ENCODE measurements at regions of chr19 and their contacts with region 1.

Region 1: GRCh38 chr19:55209693-55210472 is 582 bp upstream of the PTPRH start:
- DNase-seq: peak; percentile 75
- H3K4me3 Mint-ChIP-seq: peak overlapping the region; percentile 53
- H3K27ac Mint-ChIP-seq: peak overlapping the region; percentile 88
- H3K4me1 Mint-ChIP-seq: peaks cover 33% of the 10 kb centered on the region
- H3K27me3 Mint-ChIP-seq: no peaks in the 10 kb centered on the region
- CTCF ChIP-seq: no peak

Region 2: GRCh38 chr19:55166530-55167268 is 43.2 kb before region 1 on chr19 and contains the start of gene DNAAF3:
- CTCF ChIA-PET with region 1: interaction called, 12 read pairs
- intact Hi-C with region 1: no loop called
- DNase-seq: peak; percentile 98
- H3K4me3 Mint-ChIP-seq: peak within 1 kb of the TSS; percentile 84
- H3K27ac Mint-ChIP-seq: peak within 1 kb of the TSS; percentile 96
- H3K4me1 Mint-ChIP-seq: peaks cover 6% of the 10 kb centered on the region
- H3K27me3 Mint-ChIP-seq: peaks cover 22% of the 10 kb centered on the region
- CTCF ChIP-seq: no peak
- total RNA-seq, gene DNAAF3: 10.3 and 13.1 TPM in 2 replicates

Region 3: DNA sequence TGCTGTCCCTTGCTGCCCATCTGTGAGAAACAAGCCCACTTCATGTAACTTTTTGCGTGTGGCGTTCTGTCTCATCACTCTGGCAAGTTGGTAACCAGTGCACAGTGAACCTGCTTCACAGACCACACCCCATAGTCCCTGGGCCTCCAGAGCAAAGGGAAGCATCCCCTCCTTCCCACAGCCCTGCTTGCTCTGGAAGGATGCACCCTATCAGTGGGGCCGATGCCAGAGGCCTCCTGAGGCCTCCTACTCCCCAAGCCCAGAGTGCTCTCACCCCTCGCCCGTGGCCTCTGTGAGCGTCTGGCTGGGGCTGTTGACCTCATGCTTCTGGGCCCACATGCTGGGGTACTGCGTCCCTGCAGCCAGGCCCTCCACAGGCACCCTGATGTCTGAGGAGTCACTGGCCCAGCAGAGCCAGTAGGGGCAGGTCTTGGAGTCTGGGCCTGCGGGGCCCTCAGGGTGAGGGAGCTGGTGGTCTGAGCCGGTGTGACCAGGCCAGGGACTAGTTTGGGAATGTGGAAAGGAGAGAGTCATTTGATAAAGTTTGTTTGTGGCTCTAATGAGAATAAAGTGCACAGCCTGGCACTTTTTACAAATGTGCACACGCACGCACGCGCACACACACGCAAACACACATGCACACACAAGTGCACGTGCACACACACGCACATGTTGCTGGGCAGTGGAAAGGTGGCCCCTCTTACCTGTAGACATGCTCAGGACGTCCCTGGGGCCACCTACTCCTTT is 13.6 kb after region 1 on chr19:
- CTCF ChIA-PET with region 1: no interaction called
- intact Hi-C with region 1: no loop called
- DNase-seq: no peak
- H3K4me3 Mint-ChIP-seq: no peak overlapping the region
- H3K27ac Mint-ChIP-seq: no peak overlapping the region
- H3K4me1 Mint-ChIP-seq: no peaks in the 10 kb centered on the region
- H3K27me3 Mint-ChIP-seq: no peaks in the 10 kb centered on the region
- CTCF ChIP-seq: no peak

Region 4: GRCh38 chr19:55301459-55302317 is 91.8 kb after region 1 on chr19:
- CTCF ChIA-PET with region 1: no interaction called
- intact Hi-C with region 1: no loop called
- DNase-seq: peak; percentile 96
- H3K4me3 Mint-ChIP-seq: peak overlapping the region; percentile 75
- H3K27ac Mint-ChIP-seq: peak overlapping the region; percentile 42
- H3K4me1 Mint-ChIP-seq: peaks cover 10% of the 10 kb centered on the region
- H3K27me3 Mint-ChIP-seq: peaks cover 33% of the 10 kb centered on the region
- CTCF ChIP-seq: peak; percentile 99